Gastrocnemius medialis (tissue), 4 donors: ENCODE measurements at regions of chr12 and their contacts with region 1.

Region 1: DNA sequence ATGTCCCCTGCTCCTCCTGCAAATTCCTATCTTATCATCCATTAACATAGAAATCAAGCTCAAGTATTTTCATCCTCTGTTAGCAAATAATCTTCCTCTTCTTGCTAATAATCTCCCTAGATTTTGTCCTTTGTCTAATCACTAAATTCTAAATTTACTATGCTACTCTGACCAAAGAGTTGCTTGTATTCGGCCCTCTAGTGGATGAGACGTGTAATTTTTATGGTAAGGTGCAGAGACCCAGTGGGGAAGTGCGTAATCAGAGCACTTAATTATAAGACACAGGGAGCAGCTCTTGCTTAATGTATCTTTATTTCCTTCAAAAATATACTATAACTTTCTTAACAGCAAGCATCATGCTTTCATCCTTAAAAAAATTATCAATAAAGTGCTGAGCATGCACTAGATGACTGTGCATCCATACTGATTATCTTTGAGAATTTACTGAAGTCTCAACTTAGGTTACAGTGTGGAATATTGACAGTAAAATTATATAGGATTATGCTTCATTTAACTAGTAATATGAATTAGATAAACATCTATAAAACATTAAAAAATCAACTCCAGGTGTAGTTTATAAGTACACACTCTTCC is 212.6 kb downstream of the SLC16A7 start:
- DNase-seq: no peak
- ATAC-seq: peak in 1 of 2 donors; percentile 44
- H3K4me3 ChIP-seq: no peak overlapping the region
- H3K27ac ChIP-seq: no peak overlapping the region
- H3K4me1 ChIP-seq: no peaks in the 10 kb centered on the region
- H3K27me3 ChIP-seq: no peaks in the 10 kb centered on the region
- CTCF ChIP-seq: peak in 4 of 5 experiments; percentile 41 to 56 (median 47)
- POLR2A ChIP-seq: no peak

Region 2: GRCh38 chr12:59403259-59403932 is 405.0 kb before region 1 on chr12:
- in situ Hi-C with region 1: loop called in 3 of 4 experiments (anchors 10 to 25 kb)
- intact Hi-C with region 1: loop called (anchors 5 kb)
- DNase-seq: peak in 1 of 2 donors; percentile 12
- ATAC-seq: peak in 1 of 2 donors; percentile 66
- H3K4me3 ChIP-seq: no peak overlapping the region
- H3K27ac ChIP-seq: no peak overlapping the region
- H3K4me1 ChIP-seq: no peaks in the 10 kb centered on the region
- H3K27me3 ChIP-seq: no peaks in the 10 kb centered on the region
- CTCF ChIP-seq: peak in 3 of 5 experiments; percentile 20 to 66 (median 48)
- POLR2A ChIP-seq: no peak